ENCODE measurements at regions of chr4 and their contacts with region 1.

Region 1: GRCh38 chr4:51831133-51831532 is 11.8 kb upstream of the DCUN1D4 start:
- DNase-seq: no peak
- ATAC-seq: peak; percentile 92
- H3K4me3 ChIP-seq: no peak overlapping the region
- H3K27ac ChIP-seq: no peak overlapping the region
- H3K4me1 ChIP-seq: no peaks in the 10 kb centered on the region
- H3K27me3 ChIP-seq: no peaks in the 10 kb centered on the region
- CTCF ChIP-seq: peak; percentile 66 to 79 (median 68); a peak in 5 of 6 replicates
- EP300 ChIP-seq: no peak
- POLR2A ChIP-seq: no peak
- RAD21 ChIP-seq: peak; percentile 92

Region 2: DNA sequence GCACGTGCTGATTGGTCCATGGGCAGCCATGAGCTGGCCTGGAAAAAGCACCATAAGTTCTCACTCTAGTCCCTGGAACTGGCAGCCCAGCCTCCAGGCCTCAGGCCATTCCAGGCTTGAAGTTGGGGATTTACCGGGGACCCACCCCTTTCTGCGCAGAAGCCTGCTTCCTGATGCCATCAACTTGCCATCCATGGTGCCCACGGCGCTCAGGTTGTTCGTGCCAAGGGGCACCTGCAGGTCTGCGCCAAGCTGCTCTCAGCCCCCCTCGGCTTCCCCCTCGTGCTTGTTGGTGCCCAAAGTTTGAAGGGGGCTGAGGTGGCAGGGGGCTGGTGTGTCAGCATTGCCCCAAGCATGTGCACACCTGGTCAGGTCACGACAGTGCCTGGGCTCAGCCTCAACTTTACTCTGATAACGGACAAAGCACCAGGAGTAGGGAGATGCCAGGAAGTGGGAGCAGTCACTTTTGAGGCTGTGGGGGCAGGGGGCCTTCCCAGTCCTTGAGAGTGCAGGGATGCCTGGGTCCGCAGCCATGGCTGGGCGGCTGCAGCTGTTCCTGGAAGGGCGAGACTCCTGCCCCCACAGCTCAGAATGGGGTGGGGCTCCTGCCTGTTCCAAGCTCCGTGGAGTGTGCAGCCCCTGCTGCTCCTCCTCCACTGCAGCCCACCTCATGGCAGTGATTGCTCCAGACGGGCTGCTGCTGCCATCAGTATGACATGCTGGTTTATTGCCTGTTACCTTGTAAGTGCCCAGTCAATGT is 36.7 kb after region 1 on chr4:
- CTCF ChIA-PET with region 1: no interaction called
- POLR2A ChIA-PET with region 1: no interaction called
- RAD21 ChIA-PET with region 1: no interaction called
- SMC1A ChIA-PET with region 1: no interaction called
- in situ Hi-C with region 1: no loop called
- intact Hi-C with region 1: no loop called
- DNase-seq: no peak
- ATAC-seq: no peak
- H3K4me3 ChIP-seq: no peak overlapping the region
- H3K27ac ChIP-seq: no peak overlapping the region
- H3K4me1 ChIP-seq: no peaks in the 10 kb centered on the region
- H3K27me3 ChIP-seq: no peaks in the 10 kb centered on the region
- CTCF ChIP-seq: no peak
- EP300 ChIP-seq: no peak
- POLR2A ChIP-seq: no peak
- RAD21 ChIP-seq: no peak

Region 3: GRCh38 chr4:51932261-51932660 is 101.1 kb after region 1 on chr4:
- CTCF ChIA-PET with region 1: no interaction called
- POLR2A ChIA-PET with region 1: no interaction called
- RAD21 ChIA-PET with region 1: no interaction called
- SMC1A ChIA-PET with region 1: no interaction called
- in situ Hi-C with region 1: no loop called
- intact Hi-C with region 1: no loop called
- DNase-seq: no peak
- ATAC-seq: no peak
- H3K4me3 ChIP-seq: no peak overlapping the region
- H3K27ac ChIP-seq: no peak overlapping the region
- H3K4me1 ChIP-seq: no peaks in the 10 kb centered on the region
- H3K27me3 ChIP-seq: no peaks in the 10 kb centered on the region; a peak in 1 of 4 replicates
- CTCF ChIP-seq: no peak
- EP300 ChIP-seq: no peak
- POLR2A ChIP-seq: no peak
- RAD21 ChIP-seq: no peak

Region 4: DNA sequence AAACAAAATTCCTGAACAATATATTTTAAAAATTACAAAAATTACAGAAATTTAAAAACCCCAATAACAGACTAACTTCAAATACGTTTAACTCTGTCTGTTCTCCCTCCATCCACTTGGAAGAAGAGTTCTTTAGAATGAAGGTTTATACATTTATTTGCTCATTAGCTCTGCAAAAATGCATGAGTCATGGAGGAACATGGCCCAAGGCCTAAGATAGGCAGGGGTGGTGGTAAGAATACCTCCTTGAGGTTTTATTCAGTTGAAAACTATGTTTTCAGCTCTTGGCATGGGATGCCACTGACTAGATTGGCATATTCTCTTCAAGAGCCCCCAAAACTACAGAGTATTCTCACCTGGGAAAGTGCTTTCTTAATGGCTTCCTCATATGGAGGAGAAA is 197.8 kb after region 1 on chr4:
- CTCF ChIA-PET with region 1: interaction called, 12 read pairs
- POLR2A ChIA-PET with region 1: no interaction called
- RAD21 ChIA-PET with region 1: interaction called, 3 read pairs
- SMC1A ChIA-PET with region 1: interaction called, 6 read pairs
- in situ Hi-C with region 1: no loop called
- intact Hi-C with region 1: loop called (anchors 1 kb)
- DNase-seq: no peak
- ATAC-seq: no peak
- H3K4me3 ChIP-seq: no peak overlapping the region
- H3K27ac ChIP-seq: no peak overlapping the region
- H3K4me1 ChIP-seq: no peaks in the 10 kb centered on the region
- H3K27me3 ChIP-seq: no peaks in the 10 kb centered on the region
- CTCF ChIP-seq: no peak
- EP300 ChIP-seq: no peak
- POLR2A ChIP-seq: no peak
- RAD21 ChIP-seq: no peak

Region 5: DNA sequence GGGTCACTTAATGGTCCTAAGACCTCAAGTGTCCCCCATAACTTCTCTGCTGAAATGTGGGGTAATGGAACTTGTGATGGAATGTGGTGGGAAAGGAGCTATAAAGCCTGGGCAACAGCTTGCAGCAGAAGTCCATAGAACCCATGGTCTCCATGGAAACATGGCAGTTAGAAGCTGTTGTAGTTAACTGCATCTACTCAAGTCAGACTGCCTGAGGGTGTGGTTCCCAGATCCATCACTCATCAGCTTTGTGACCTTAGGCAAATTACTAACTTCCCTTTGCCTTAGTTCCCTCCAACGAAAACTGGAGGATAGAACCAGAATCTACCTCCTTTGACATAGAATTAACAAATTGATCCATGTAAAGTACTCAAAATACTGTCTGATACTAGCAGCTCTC is 333.0 kb after region 1 on chr4:
- CTCF ChIA-PET with region 1: no interaction called
- POLR2A ChIA-PET with region 1: no interaction called
- RAD21 ChIA-PET with region 1: no interaction called
- SMC1A ChIA-PET with region 1: no interaction called
- in situ Hi-C with region 1: no loop called
- intact Hi-C with region 1: no loop called
- DNase-seq: no peak
- ATAC-seq: no peak
- H3K4me3 ChIP-seq: no peak overlapping the region
- H3K27ac ChIP-seq: no peak overlapping the region
- H3K4me1 ChIP-seq: no peaks in the 10 kb centered on the region
- H3K27me3 ChIP-seq: no peaks in the 10 kb centered on the region
- CTCF ChIP-seq: no peak
- EP300 ChIP-seq: no peak
- POLR2A ChIP-seq: no peak
- RAD21 ChIP-seq: no peak

Region 6: DNA sequence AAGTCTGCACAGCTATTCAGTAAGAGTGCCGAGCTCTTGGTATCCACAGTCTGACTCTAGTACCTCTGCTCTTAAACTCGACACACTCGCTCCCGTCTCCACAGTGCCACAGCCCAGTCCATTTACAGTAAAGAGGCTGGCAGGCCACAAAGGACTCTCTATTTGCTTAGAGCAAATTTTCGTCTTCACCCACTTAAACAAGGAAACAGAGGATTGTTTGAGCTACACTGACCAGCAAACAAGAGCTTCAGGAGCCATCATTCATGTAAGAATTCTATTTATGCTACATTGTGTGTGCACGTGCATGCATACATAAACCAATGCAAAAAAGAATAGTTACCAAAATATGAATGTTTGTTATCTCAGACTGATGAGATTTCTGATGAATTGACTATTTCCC is 537.8 kb after region 1 on chr4:
- CTCF ChIA-PET with region 1: no interaction called
- POLR2A ChIA-PET with region 1: no interaction called
- RAD21 ChIA-PET with region 1: no interaction called
- SMC1A ChIA-PET with region 1: no interaction called
- in situ Hi-C with region 1: no loop called
- intact Hi-C with region 1: no loop called
- DNase-seq: no peak
- ATAC-seq: no peak
- H3K4me3 ChIP-seq: no peak overlapping the region
- H3K27ac ChIP-seq: no peak overlapping the region
- H3K4me1 ChIP-seq: no peaks in the 10 kb centered on the region
- H3K27me3 ChIP-seq: no peaks in the 10 kb centered on the region
- CTCF ChIP-seq: no peak
- EP300 ChIP-seq: no peak
- POLR2A ChIP-seq: no peak
- RAD21 ChIP-seq: no peak

Measured in GM12878 (cell line).